AG04449 (cell line): ENCODE measurements at regions of chr18 and their contacts with region 1.

Region 1: GRCh38 chr18:5295981-5296705 is 617 bp upstream of the ZBTB14 start:
- DNase-seq: peak; percentile 67
- H3K4me3 ChIP-seq: peak overlapping the region; percentile 87
- CTCF ChIP-seq: no peak

Region 2: GRCh38 chr18:5237723-5238370 is 58.3 kb before region 1 on chr18:
- CTCF ChIA-PET with region 1: interaction called, 10 read pairs
- POLR2A ChIA-PET with region 1: interaction called, 31 read pairs
- DNase-seq: peak; percentile 42
- H3K4me3 ChIP-seq: peak overlapping the region; percentile 88
- CTCF ChIP-seq: no peak

Region 3: GRCh38 chr18:5600378-5601071 is 304.4 kb after region 1 on chr18:
- CTCF ChIA-PET with region 1: no interaction called
- POLR2A ChIA-PET with region 1: no interaction called
- DNase-seq: no peak
- H3K4me3 ChIP-seq: no peak overlapping the region
- CTCF ChIP-seq: no peak

Region 4: GRCh38 chr18:5943514-5943913 is 647.4 kb after region 1 on chr18:
- CTCF ChIA-PET with region 1: no interaction called
- POLR2A ChIA-PET with region 1: no interaction called
- DNase-seq: no peak
- H3K4me3 ChIP-seq: no peak overlapping the region
- CTCF ChIP-seq: no peak